Endothelial cell of umbilical vein (primary cell): ENCODE measurements at regions of chr9 and their contacts with region 1.

Region 1: GRCh38 chr9:85716031-85716877 is 25.5 kb downstream of the AGTPBP1 start:
- DNase-seq: no peak
- H3K4me3 ChIP-seq: no peak overlapping the region
- H3K27ac ChIP-seq: no peak overlapping the region
- H3K4me1 ChIP-seq: no peaks in the 10 kb centered on the region
- H3K27me3 ChIP-seq: no peaks in the 10 kb centered on the region
- CTCF ChIP-seq: peak in 1 of 2 donors; percentile 3
- POLR2A ChIP-seq: no peak

Region 2: GRCh38 chr9:85658716-85659115 is 57.5 kb before region 1 on chr9:
- CTCF ChIA-PET with region 1: no interaction called
- POLR2A ChIA-PET with region 1: no interaction called
- dilution Hi-C with region 1: no loop called
- intact Hi-C with region 1: loop called (anchors 10 kb)
- DNase-seq: no peak
- H3K4me3 ChIP-seq: no peak overlapping the region
- H3K27ac ChIP-seq: no peak overlapping the region
- H3K4me1 ChIP-seq: no peaks in the 10 kb centered on the region
- H3K27me3 ChIP-seq: no peaks in the 10 kb centered on the region
- CTCF ChIP-seq: no peak
- POLR2A ChIP-seq: no peak

Region 3: DNA sequence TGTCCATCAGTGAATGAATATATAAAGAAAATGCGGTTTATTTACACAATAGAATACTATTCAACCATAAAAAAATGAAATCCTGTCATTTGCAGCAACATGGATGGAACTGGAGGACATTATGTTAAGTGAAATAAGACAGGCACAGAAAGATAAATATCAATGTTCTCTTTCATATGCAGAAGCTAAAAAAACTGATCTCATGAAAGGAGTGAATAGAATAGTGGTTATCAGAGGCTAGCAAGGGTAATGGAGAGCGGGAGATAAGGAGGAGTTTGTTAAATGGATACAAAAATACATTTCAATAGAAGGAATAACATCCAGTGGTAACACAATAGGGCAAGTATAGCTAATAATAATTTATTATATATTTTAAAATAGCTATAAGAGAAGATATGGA is 39.5 kb before region 1 on chr9:
- CTCF ChIA-PET with region 1: no interaction called
- POLR2A ChIA-PET with region 1: no interaction called
- dilution Hi-C with region 1: no loop called
- intact Hi-C with region 1: no loop called
- DNase-seq: no peak
- H3K4me3 ChIP-seq: no peak overlapping the region
- H3K27ac ChIP-seq: no peak overlapping the region
- H3K4me1 ChIP-seq: no peaks in the 10 kb centered on the region
- H3K27me3 ChIP-seq: no peaks in the 10 kb centered on the region
- CTCF ChIP-seq: no peak
- POLR2A ChIP-seq: no peak